ENCODE measurements at regions of chr2 and their contacts with region 1.

Region 1: GRCh38 chr2:26968001-26968400 is 2.4 kb upstream of the MAPRE3 start:
- DNase-seq: no peak
- H3K4me3 ChIP-seq: no peak overlapping the region
- H3K27ac ChIP-seq: no peak overlapping the region
- H3K4me1 ChIP-seq: peaks cover 35% of the 10 kb centered on the region
- H3K27me3 ChIP-seq: peaks cover 10% of the 10 kb centered on the region
- CTCF ChIP-seq: no peak

Region 2: DNA sequence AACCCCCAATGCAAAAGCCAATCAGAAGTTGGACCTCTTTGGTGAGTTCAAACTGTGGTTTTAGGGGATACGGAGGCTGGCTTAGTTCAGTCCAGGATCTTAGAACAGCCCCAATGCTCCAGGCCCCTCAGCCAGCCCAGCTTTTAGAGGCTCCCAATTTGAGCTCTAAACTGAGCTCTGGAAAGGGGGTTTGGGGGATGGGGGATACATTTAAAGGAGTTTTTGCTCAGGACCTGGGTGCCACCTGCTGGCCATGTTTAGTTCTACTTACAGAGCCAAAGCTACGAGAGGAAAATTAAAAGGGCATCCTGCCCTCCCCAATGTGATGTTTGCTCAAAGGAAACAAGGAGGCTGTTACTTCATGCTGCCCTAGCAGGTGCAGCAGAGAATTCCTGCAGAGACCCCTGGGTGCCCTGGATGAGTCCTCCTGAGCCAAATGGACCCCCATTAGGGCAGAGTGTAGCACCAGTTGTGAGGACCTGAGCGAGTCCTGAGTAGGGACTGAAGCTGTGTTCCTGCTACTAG is 48.9 kb after region 1 on chr2:
- intact Hi-C with region 1: loop called (anchors 5 kb)
- DNase-seq: peak; percentile 41
- H3K4me3 ChIP-seq: no peak overlapping the region
- H3K27ac ChIP-seq: no peak overlapping the region
- H3K4me1 ChIP-seq: peaks cover 76% of the 10 kb centered on the region
- H3K27me3 ChIP-seq: no peaks in the 10 kb centered on the region
- CTCF ChIP-seq: peak; percentile 71

Region 3: DNA sequence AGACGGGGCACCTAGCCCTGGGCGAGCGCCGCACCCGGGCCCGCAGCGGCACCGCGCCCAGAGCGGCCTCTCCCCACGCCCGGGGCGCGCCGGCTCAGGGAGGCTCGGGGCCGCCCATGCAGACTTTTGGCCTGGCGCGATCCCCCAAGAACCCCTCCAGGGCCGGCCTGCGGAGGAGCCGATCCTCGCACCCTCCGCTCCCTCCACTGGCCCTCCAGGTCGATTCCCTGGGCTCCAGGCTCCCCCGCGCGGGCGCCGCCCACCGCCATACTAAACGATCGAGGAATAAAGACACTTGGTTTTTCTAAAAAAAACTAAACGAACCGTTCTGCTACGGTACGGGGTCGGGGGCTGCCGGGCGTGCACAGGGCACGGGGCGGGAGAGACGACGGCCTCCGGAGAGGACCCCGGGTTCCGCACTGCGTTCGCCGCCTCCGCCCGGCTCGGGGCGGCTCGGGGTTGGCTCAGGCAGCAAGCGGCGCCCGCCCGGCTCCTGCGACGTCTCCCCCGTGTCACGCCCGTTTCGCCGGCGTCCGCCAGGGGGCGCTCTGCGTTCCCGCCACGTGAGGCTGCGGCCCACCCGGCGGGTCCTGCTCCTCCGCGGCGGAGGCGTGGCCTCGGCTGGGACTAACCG is 118.2 kb after region 1 on chr2:
- intact Hi-C with region 1: loop called (anchors 10 kb)
- DNase-seq: peak; percentile 96
- H3K4me3 ChIP-seq: peak overlapping the region; percentile 84
- H3K27ac ChIP-seq: peak overlapping the region; percentile 97
- H3K4me1 ChIP-seq: peaks cover 50% of the 10 kb centered on the region
- H3K27me3 ChIP-seq: no peaks in the 10 kb centered on the region
- CTCF ChIP-seq: peak; percentile 87

Region 4: DNA sequence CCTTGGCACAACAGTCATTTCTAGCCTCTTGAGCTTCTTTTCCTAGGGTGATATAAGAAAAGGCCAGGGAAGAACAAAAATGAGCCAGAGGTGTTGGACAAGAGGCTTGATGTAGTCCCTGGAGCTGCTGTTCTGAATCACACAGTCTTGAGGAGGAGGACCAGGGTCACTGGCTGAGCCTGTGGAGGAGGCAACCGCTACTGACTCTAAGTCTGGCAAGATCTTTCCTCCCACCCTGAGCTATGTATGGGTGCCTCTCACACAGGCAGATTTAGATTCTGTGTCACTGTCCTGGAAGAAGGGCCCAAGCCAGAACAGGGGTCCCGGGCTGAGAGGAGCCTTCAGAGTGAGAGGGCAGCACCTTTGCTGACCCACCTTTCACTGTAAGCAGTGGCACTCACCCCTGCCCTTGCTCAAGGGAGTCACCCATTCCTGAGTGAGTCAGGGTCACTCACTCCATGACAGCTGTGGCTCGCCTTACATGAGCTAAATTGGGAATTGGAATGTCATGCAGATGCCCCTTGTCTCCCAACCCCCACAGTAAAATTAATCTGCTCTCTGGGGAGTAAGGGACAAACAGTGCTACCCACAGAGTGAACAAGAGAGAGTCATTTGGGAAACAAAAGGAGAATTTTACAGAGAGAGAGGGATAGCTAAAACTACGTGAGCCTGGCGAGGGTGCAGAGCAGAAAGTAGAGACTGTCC is 314.0 kb after region 1 on chr2 and contains the start of gene TRIM54:
- intact Hi-C with region 1: no loop called
- DNase-seq: peak; percentile 39
- H3K4me3 ChIP-seq: peak within 1 kb of the TSS; percentile 74
- H3K27ac ChIP-seq: peak within 1 kb of the TSS; percentile 93
- H3K4me1 ChIP-seq: peaks cover 32% of the 10 kb centered on the region
- H3K27me3 ChIP-seq: peaks cover 32% of the 10 kb centered on the region
- CTCF ChIP-seq: no peak
- total RNA-seq, gene TRIM54: 285 TPM

Measured in left ventricle myocardium inferior (tissue), 1 donor.